GM12878 (cell line): ENCODE measurements at regions of chr2 and their contacts with region 1.

Region 1: DNA sequence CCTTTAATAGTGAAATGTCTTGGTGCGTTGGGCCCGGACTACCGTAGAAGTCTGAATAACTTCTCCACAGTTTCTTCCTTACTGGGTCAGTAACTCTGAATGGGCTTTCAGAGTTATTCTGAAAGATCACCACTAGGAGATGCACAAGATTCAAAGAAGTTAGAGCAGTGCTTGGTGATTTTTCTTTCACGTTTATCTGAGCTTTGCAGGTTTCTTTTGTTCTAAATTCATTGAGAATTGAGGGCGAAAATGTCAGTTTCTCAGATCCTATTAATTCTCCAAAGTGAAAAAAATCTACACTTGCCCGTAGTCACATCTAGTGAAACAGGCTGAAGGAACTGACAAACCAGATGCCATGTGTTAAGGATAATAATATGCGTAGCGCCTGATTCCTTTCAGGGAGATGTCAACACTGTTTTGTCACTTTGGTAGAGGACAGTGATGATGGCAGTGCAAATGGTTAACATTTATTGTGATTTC is 70.1 kb downstream of the QPCT start:
- DNase-seq: peak; percentile 53
- ATAC-seq: peak; percentile 94
- H3K4me3 ChIP-seq: no peak overlapping the region
- H3K27ac ChIP-seq: no peak overlapping the region
- H3K4me1 ChIP-seq: peaks cover 4% of the 10 kb centered on the region; the same call in 1 of the 2 replicates
- H3K27me3 ChIP-seq: no peaks in the 10 kb centered on the region
- CTCF ChIP-seq: peak; percentile 88 to 99 (median 98); a peak in 5 of 6 replicates
- EP300 ChIP-seq: no peak
- POLR2A ChIP-seq: no peak
- RAD21 ChIP-seq: peak; percentile 100

Region 2: DNA sequence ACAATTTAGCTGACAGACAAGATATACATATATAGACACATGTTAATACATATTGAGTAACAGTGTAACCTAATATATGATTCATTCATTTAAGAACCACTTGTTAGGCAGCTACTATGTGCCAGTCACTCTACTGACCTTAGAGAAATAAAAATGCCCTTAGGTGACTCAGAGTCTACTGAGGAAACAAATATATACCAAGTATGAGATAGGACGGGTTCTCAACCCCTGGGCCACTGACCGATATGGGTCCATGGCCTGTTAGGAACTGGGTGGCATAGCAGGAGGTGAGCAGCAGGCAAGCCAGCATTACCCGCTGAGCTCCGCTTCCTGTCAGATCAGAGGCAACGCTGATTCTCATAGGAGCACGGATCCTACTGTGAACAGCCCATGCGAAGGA is 462.9 kb before region 1 on chr2:
- CTCF ChIA-PET with region 1: no interaction called
- POLR2A ChIA-PET with region 1: no interaction called
- RAD21 ChIA-PET with region 1: no interaction called
- SMC1A ChIA-PET with region 1: no interaction called
- in situ Hi-C with region 1: no loop called
- intact Hi-C with region 1: no loop called
- DNase-seq: no peak
- ATAC-seq: peak; percentile 16; the same call in 2 of the 3 replicates
- H3K4me3 ChIP-seq: no peak overlapping the region
- H3K27ac ChIP-seq: no peak overlapping the region
- H3K4me1 ChIP-seq: no peaks in the 10 kb centered on the region; the same call in 1 of the 2 replicates
- H3K27me3 ChIP-seq: no peaks in the 10 kb centered on the region
- CTCF ChIP-seq: no peak
- EP300 ChIP-seq: no peak
- POLR2A ChIP-seq: no peak
- RAD21 ChIP-seq: no peak

Region 3: DNA sequence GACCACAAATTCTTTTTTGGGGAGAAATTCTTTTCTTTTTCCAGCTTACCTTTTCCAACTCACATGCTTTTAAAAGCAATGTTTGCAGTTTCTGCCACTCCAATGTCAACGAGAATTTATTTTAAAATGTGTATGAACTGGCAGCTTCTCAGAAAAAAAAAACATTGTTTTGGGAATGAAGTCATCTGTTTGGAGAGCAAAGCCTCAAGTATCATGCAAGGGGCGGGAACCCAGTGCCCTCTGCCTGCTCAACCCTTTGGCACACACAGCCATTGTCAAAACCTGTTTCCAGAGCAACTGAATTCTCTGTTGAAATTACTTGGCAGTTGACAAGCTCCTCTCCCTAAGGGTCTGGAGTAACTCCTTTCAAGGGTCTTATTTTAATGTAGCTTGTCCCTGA is 58.4 kb after region 1 on chr2:
- CTCF ChIA-PET with region 1: no interaction called
- POLR2A ChIA-PET with region 1: no interaction called
- RAD21 ChIA-PET with region 1: no interaction called
- SMC1A ChIA-PET with region 1: no interaction called
- in situ Hi-C with region 1: no loop called
- intact Hi-C with region 1: no loop called
- DNase-seq: no peak
- ATAC-seq: no peak
- H3K4me3 ChIP-seq: no peak overlapping the region
- H3K27ac ChIP-seq: no peak overlapping the region
- H3K4me1 ChIP-seq: no peaks in the 10 kb centered on the region
- H3K27me3 ChIP-seq: no peaks in the 10 kb centered on the region
- CTCF ChIP-seq: no peak
- EP300 ChIP-seq: no peak
- POLR2A ChIP-seq: no peak
- RAD21 ChIP-seq: no peak

Region 4: GRCh38 chr2:37523814-37524362 is 109.4 kb after region 1 on chr2:
- CTCF ChIA-PET with region 1: interaction called, 4 read pairs
- POLR2A ChIA-PET with region 1: no interaction called
- RAD21 ChIA-PET with region 1: no interaction called
- SMC1A ChIA-PET with region 1: interaction called, 10 read pairs
- in situ Hi-C with region 1: no loop called
- intact Hi-C with region 1: no loop called
- DNase-seq: no peak
- ATAC-seq: no peak
- H3K4me3 ChIP-seq: no peak overlapping the region
- H3K27ac ChIP-seq: no peak overlapping the region
- H3K4me1 ChIP-seq: no peaks in the 10 kb centered on the region
- H3K27me3 ChIP-seq: no peaks in the 10 kb centered on the region
- CTCF ChIP-seq: no peak
- EP300 ChIP-seq: no peak
- POLR2A ChIP-seq: no peak
- RAD21 ChIP-seq: no peak

Region 5: DNA sequence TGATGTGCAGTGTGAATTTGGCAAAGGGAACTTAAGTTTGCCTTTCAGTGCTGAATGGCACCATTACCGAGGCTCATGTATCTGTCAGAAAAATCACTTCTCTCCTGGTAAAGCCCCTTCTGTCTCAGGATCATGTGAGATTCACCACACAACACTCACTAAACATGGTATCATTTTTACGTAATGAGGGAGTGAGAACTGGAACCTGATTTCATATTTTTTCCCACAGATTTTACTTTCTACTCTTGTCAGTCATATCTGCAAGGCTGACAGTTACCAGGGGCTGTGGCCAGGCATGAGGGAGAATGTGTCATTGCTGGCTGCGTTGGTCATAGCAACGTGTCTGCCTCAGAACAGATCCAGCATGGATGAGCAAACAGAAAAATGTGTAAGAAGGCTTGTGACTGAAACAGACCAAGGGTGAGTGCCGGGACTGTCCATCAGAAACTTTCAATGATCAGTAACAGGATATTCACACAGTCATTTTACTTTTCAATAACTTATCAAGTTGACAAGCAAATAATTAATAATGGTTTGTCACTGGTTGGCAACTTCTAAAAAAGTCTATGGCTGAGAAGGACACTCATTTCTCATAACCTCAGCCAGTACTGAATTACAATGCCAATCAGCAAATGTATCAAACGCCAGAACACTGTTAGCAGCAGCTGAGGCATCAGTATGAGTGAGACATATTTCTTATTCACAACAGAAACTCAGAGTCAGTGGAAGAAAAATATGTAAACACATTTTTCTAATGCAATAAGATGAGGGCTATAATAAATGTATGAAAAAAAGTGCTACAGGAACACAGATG is 156.5 kb after region 1 on chr2:
- CTCF ChIA-PET with region 1: interaction called, 15 read pairs
- POLR2A ChIA-PET with region 1: interaction called, 3 read pairs
- RAD21 ChIA-PET with region 1: interaction called, 20 read pairs
- SMC1A ChIA-PET with region 1: interaction called, 16 read pairs
- in situ Hi-C with region 1: no loop called
- intact Hi-C with region 1: loop called (anchors 1 kb)
- DNase-seq: peak; percentile 98
- ATAC-seq: peak; percentile 87
- H3K4me3 ChIP-seq: peak overlapping the region; percentile 0; the same call in 1 of the 2 replicates
- H3K27ac ChIP-seq: peak overlapping the region; percentile 90
- H3K4me1 ChIP-seq: peaks cover 41% of the 10 kb centered on the region
- H3K27me3 ChIP-seq: no peaks in the 10 kb centered on the region
- CTCF ChIP-seq: no peak
- EP300 ChIP-seq: peak; percentile 86 to 87
- POLR2A ChIP-seq: peak; percentile 59
- RAD21 ChIP-seq: peak; percentile 45

Region 6: DNA sequence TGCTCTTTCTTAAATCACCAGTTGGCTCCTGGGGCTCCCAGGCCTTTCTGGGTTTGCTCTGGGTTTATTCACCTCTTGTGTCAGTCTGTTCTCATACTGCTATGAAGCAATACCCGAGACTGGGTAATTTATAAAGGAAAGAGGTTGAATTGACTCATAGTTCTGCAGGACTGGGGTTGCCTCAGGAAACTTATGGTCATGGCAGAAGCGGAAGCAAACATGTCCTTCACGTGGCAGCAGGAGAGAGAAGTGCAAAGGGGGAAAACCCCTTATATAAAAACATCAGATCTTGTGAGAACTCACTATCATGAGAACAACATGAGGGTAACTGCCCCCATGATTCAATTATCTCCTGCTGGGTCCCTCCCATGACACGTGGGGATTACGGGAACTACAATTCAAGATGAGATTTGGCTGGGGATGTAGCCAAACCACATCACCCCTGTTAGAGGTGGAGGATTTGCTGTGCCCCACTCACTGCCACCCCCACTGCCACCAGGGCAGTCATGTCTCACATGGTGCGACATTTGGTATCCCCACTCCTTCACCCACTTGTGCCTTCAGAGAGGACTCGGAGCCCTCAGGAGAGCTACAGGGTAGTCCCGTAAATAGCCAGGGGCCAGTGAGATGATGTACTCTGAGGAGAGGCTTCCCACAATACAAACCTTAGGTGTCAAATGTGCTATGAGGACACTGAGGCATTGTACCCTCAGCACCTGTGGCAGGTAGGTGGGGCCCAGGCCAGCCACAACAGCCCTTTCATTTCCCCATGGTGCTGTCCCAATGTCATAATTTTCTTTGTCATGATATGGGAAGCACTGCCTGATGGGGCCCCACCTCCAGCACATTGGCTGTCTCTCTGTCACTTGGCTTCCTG is 221.2 kb after region 1 on chr2:
- CTCF ChIA-PET with region 1: interaction called, 14 read pairs
- POLR2A ChIA-PET with region 1: no interaction called
- RAD21 ChIA-PET with region 1: interaction called, 11 read pairs
- SMC1A ChIA-PET with region 1: interaction called, 8 read pairs
- in situ Hi-C with region 1: no loop called
- intact Hi-C with region 1: loop called (anchors 5 kb)
- DNase-seq: peak; percentile 92
- ATAC-seq: peak; percentile 80
- H3K4me3 ChIP-seq: no peak overlapping the region
- H3K27ac ChIP-seq: peak overlapping the region; percentile 91
- H3K4me1 ChIP-seq: peaks cover 26% of the 10 kb centered on the region
- H3K27me3 ChIP-seq: no peaks in the 10 kb centered on the region
- CTCF ChIP-seq: no peak
- EP300 ChIP-seq: peak; percentile 27 to 69; a peak in 3 of 4 replicates
- POLR2A ChIP-seq: peak; percentile 14
- RAD21 ChIP-seq: peak; percentile 37; the same call in 1 of the 2 replicates

Region 7: DNA sequence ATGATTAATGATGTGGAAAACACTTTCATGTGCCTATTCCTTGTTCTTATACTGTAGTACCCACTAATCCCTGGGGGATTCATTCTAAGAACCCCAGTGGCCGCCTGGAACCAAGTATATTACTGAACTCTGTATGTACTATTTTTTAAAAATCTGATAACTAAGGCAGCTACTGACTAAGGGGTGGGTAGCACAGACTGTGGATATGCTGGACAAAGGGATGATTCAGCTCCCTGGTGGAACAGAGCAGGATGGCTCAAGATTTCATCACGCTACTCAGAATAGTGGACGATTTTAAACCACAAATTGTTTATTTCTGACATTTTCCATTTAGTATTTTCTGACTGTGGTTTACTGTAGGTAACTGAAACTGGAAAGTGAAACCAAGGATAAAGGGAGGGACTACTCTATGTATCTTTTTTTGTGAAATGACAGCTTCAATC is 298.8 kb after region 1 on chr2:
- CTCF ChIA-PET with region 1: no interaction called
- POLR2A ChIA-PET with region 1: no interaction called
- RAD21 ChIA-PET with region 1: no interaction called
- SMC1A ChIA-PET with region 1: no interaction called
- in situ Hi-C with region 1: no loop called
- intact Hi-C with region 1: no loop called
- DNase-seq: peak; percentile 13
- ATAC-seq: peak; percentile 60
- H3K4me3 ChIP-seq: no peak overlapping the region
- H3K27ac ChIP-seq: no peak overlapping the region
- H3K4me1 ChIP-seq: peaks cover 7% of the 10 kb centered on the region; the same call in 1 of the 2 replicates
- H3K27me3 ChIP-seq: no peaks in the 10 kb centered on the region
- CTCF ChIP-seq: no peak
- EP300 ChIP-seq: no peak
- POLR2A ChIP-seq: no peak
- RAD21 ChIP-seq: no peak

Region 8: DNA sequence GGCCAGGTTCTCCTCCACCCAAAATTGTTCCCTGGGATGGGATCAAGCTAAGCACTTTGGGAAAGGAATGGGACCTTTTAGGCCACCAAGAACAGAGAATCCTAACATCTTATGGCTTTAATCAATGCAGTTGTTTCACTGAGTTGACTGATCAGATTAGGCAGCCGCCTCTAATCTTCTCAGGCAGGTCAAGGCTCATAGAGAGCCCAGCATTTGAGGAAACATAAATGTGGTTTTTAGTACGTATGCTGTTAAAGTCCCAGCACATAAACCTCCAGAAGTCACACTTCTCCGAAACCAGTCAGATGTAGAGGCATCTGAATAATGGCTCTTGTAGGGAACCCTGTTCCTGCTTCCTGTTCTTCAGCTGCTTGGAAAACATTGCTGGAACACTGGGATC is 411.1 kb after region 1 on chr2:
- CTCF ChIA-PET with region 1: interaction called, 330 read pairs
- POLR2A ChIA-PET with region 1: no interaction called
- RAD21 ChIA-PET with region 1: interaction called, 291 read pairs
- SMC1A ChIA-PET with region 1: interaction called, 351 read pairs
- in situ Hi-C with region 1: loop called (anchors 5 kb)
- intact Hi-C with region 1: no loop called
- DNase-seq: no peak
- ATAC-seq: no peak
- H3K4me3 ChIP-seq: no peak overlapping the region
- H3K27ac ChIP-seq: no peak overlapping the region
- H3K4me1 ChIP-seq: no peaks in the 10 kb centered on the region
- H3K27me3 ChIP-seq: no peaks in the 10 kb centered on the region
- CTCF ChIP-seq: no peak
- EP300 ChIP-seq: no peak
- POLR2A ChIP-seq: no peak
- RAD21 ChIP-seq: no peak

Region 9: DNA sequence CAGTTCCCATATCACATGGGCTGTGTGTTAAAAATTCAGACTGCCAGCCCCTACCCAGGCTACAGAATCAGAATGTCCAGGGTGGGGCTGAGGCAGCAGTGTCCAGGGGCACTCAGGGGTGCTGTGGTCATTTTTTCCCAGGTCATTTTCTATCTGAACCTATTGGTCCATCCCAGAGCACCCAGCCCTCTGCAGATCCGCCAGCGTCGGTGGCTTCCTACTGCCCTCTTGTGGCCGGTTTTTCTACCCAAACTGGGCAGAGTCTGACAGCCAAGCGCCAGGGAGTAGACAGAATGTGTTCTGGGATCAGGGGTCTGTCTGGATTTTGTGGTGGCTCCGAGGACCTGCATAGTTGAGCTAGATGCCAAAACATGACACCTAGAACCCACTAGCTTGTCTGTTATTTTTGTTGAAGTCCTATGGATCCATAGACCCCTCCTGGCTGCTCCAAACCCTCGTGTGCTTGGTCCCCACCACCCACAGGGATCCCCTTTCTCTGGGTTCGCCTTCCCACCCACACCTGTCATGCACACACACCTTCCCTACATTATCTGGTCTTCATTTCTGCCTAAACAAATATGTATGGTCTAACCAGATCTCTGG is 476.5 kb after region 1 on chr2:
- CTCF ChIA-PET with region 1: interaction called, 17 read pairs
- POLR2A ChIA-PET with region 1: no interaction called
- RAD21 ChIA-PET with region 1: interaction called, 9 read pairs
- SMC1A ChIA-PET with region 1: interaction called, 19 read pairs
- in situ Hi-C with region 1: no loop called
- intact Hi-C with region 1: loop called (anchors 5 kb)
- DNase-seq: no peak
- ATAC-seq: peak; percentile 84
- H3K4me3 ChIP-seq: no peak overlapping the region
- H3K27ac ChIP-seq: no peak overlapping the region
- H3K4me1 ChIP-seq: peaks cover 43% of the 10 kb centered on the region
- H3K27me3 ChIP-seq: no peaks in the 10 kb centered on the region
- CTCF ChIP-seq: peak; percentile 73 to 84 (median 82)
- EP300 ChIP-seq: peak in 1 of 2 experiments; percentile 15; a peak in 1 of 4 replicates
- POLR2A ChIP-seq: no peak
- RAD21 ChIP-seq: peak; percentile 88